ENCODE measurements at regions of chr7 and their contacts with region 1.

Region 1: DNA sequence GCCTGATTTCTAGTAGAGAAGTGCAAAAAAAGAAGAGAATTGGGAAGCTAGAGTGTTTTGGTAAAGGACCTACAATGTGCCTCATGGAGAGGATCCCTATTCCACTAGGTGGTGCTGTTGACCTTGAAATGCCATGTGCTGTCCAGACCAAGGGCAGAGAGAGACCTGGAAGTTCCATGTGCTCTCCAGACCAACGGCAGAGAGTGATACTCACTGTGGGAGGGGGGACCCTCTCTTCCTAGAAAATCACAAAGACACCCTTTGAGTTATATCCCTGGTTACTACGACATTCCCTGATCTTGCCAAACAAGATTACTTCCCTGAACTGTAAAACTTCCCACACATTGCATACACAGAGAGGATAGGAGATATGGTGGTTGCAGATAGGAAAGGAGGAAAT is 212.7 kb upstream of the ZNF804B start:
- DNase-seq: peak; percentile 20
- ATAC-seq: peak; percentile 94
- H3K4me3 ChIP-seq: no peak overlapping the region
- H3K27ac ChIP-seq: no peak overlapping the region
- H3K4me1 ChIP-seq: no peaks in the 10 kb centered on the region
- H3K27me3 ChIP-seq: no peaks in the 10 kb centered on the region
- CTCF ChIP-seq: peak; percentile 65 to 71 (median 66); a peak in 5 of 6 replicates
- EP300 ChIP-seq: no peak
- POLR2A ChIP-seq: no peak
- RAD21 ChIP-seq: peak; percentile 90

Region 2: GRCh38 chr7:88401007-88401623 is 145.7 kb before region 1 on chr7:
- CTCF ChIA-PET with region 1: interaction called, 4 read pairs
- POLR2A ChIA-PET with region 1: no interaction called
- RAD21 ChIA-PET with region 1: interaction called, 5 read pairs
- SMC1A ChIA-PET with region 1: interaction called, 3 read pairs
- in situ Hi-C with region 1: no loop called
- intact Hi-C with region 1: loop called (anchors 10 kb)
- DNase-seq: no peak
- ATAC-seq: peak; percentile 55
- H3K4me3 ChIP-seq: no peak overlapping the region
- H3K27ac ChIP-seq: no peak overlapping the region
- H3K4me1 ChIP-seq: no peaks in the 10 kb centered on the region
- H3K27me3 ChIP-seq: no peaks in the 10 kb centered on the region
- CTCF ChIP-seq: peak; percentile 47 to 60 (median 58)
- EP300 ChIP-seq: no peak
- POLR2A ChIP-seq: no peak
- RAD21 ChIP-seq: peak; percentile 56

Region 3: GRCh38 chr7:88566173-88566729 is 19.4 kb after region 1 on chr7:
- CTCF ChIA-PET with region 1: interaction called, 5 read pairs
- POLR2A ChIA-PET with region 1: no interaction called
- RAD21 ChIA-PET with region 1: no interaction called
- SMC1A ChIA-PET with region 1: interaction called, 10 read pairs
- in situ Hi-C with region 1: no loop called
- intact Hi-C with region 1: no loop called
- DNase-seq: no peak
- ATAC-seq: no peak
- H3K4me3 ChIP-seq: no peak overlapping the region
- H3K27ac ChIP-seq: no peak overlapping the region
- H3K4me1 ChIP-seq: no peaks in the 10 kb centered on the region
- H3K27me3 ChIP-seq: no peaks in the 10 kb centered on the region
- CTCF ChIP-seq: no peak
- EP300 ChIP-seq: no peak
- POLR2A ChIP-seq: no peak
- RAD21 ChIP-seq: no peak

Region 4: GRCh38 chr7:88589927-88590326 is 43.1 kb after region 1 on chr7:
- CTCF ChIA-PET with region 1: no interaction called
- POLR2A ChIA-PET with region 1: no interaction called
- RAD21 ChIA-PET with region 1: no interaction called
- SMC1A ChIA-PET with region 1: no interaction called
- in situ Hi-C with region 1: no loop called
- intact Hi-C with region 1: no loop called
- DNase-seq: no peak
- ATAC-seq: no peak
- H3K4me3 ChIP-seq: no peak overlapping the region
- H3K27ac ChIP-seq: no peak overlapping the region
- H3K4me1 ChIP-seq: no peaks in the 10 kb centered on the region
- H3K27me3 ChIP-seq: no peaks in the 10 kb centered on the region
- CTCF ChIP-seq: no peak
- EP300 ChIP-seq: no peak
- POLR2A ChIP-seq: no peak
- RAD21 ChIP-seq: no peak

Region 5: DNA sequence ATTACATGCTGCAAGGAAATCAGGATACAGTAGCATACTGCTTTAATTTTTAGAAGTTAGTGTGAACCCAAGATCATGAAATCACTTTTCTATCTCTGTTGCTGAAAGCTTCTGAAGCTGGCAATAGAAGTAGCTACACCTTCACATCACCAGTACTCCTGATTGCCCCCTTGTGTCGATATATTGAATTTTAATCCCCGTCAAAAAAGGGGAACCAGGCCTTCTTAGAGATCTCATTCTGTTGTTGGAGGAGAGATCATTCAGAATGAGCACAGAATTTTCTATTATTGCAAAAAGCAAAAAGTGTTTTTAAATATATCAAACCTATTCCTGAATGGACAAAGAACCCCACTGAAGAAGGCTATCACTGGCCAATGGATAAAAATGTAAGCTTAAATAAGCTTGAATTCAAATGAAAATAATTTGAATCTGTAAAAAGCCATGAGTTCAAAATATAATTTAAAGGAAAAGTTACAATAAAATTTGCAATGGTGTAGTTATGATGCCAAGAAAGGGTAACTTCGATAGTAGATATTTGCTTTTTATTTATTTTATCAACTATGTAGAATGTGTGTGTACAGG is 288.4 kb after region 1 on chr7:
- CTCF ChIA-PET with region 1: interaction called, 78 read pairs
- POLR2A ChIA-PET with region 1: no interaction called
- RAD21 ChIA-PET with region 1: interaction called, 58 read pairs
- SMC1A ChIA-PET with region 1: interaction called, 50 read pairs
- in situ Hi-C with region 1: loop called (anchors 5 kb)
- intact Hi-C with region 1: loop called (anchors 1 kb)
- DNase-seq: peak; percentile 15
- ATAC-seq: peak; percentile 97
- H3K4me3 ChIP-seq: no peak overlapping the region
- H3K27ac ChIP-seq: no peak overlapping the region
- H3K4me1 ChIP-seq: no peaks in the 10 kb centered on the region
- H3K27me3 ChIP-seq: no peaks in the 10 kb centered on the region
- CTCF ChIP-seq: peak; percentile 47 to 63 (median 59)
- EP300 ChIP-seq: 0 out of 4 replicates have a peak, but pooled peaks of 1 of the 2 experiments have one; percentile 19
- POLR2A ChIP-seq: no peak
- RAD21 ChIP-seq: peak; percentile 71

Region 6: DNA sequence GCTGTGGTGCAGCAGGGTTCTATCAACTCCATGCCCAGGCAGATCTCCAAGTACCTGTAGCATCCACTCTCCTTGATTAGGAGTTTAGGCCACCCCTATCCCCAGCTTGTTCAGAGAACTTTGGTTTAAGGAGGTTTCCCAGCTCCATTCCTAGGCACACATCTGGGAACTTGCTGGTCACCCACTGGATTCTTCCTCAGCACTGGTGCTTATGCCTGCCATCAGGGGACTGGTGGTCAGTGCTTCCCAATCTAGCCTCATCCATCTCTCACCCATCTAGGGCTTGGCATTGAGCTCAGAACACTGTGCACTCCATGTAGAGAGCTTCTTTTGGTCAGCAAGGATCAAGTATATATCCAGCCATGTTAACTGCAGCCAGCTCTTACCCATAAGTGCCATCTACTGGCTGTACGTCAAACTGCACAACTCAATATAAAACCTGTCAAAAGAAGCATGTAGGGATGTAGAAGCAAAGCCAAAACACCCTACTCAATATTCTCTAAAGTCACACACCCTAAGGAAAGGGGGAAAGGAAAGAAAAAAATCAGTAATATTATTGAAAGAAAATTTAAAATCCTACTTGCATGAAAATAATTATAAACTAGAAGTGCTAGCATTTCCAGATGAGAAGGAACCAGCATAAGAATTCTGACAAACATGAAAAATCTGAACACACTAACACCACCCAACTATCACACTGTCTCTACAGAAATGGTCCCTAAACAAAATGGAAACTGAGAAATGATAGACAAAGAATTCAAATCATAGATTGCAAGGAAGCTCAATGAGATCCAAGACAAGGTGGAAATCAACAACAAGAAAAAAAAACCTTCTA is 1076.2 kb after region 1 on chr7:
- CTCF ChIA-PET with region 1: interaction called, 38 read pairs
- POLR2A ChIA-PET with region 1: no interaction called
- RAD21 ChIA-PET with region 1: interaction called, 6 read pairs
- SMC1A ChIA-PET with region 1: interaction called, 13 read pairs
- in situ Hi-C with region 1: loop called (anchors 5 kb)
- intact Hi-C with region 1: loop called (anchors 2 kb)
- DNase-seq: peak; percentile 3
- ATAC-seq: peak; percentile 93
- H3K4me3 ChIP-seq: no peak overlapping the region
- H3K27ac ChIP-seq: no peak overlapping the region
- H3K4me1 ChIP-seq: no peaks in the 10 kb centered on the region
- H3K27me3 ChIP-seq: no peaks in the 10 kb centered on the region
- CTCF ChIP-seq: peak; percentile 69 to 80 (median 79)
- EP300 ChIP-seq: no peak
- POLR2A ChIP-seq: no peak
- RAD21 ChIP-seq: peak; percentile 79

Measured in GM12878 (cell line).